Transverse colon (tissue), 4 donors: ENCODE measurements at regions of chr16 and their contacts with region 1.

Region 1: DNA sequence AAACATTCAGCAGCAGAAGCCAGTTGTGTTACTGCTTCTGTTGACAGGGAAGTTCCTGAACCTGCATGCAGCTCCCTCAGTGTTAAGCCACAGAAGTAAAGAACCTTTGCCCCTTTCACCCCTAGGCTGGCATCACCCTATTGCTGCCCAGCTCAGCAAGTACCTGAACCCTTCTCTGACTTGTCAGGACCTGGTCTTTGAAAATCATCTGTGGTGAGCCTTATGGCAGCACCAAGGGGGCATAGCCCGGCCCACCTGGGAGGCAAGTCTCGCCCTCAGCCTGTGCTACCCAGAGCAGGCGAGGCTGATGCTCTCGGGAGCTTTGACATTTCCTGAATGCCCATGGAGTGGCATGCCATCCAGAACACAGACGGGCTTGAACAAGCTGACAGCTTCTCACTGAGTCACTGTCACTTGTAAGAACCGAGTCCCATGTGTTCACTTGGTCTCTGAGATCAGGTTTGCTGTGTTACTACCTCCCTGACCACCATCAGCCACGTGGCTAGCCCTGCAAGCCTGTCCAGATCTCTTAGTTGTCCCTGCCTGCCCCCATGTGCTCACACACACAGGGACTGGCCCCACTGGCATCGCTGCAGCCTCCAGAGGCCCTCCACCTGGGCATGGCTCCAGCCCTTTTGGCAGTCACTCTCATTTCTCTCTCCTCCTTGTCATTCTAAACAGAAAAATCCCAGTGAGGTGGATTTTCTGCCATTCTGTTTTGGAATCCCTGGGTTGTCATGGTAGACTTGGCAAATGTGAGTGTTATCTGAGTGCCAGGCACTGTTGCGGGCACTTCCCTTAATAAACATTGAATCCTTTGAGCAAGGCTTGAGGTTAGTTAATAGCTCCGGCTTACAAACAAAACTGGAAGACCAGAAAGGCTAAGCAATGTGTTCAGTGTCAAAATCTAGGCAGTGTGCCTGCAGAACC is 2.9 kb upstream of the CARMIL2 start:
- DNase-seq: no peak
- H3K4me3 ChIP-seq: no peak overlapping the region
- H3K27ac ChIP-seq: peak overlapping the region in 1 of 4 donors; percentile 23
- H3K4me1 ChIP-seq: peaks cover 0 to 18% (median 8%) of the 10 kb centered on the region in 4 donors
- H3K27me3 ChIP-seq: peaks cover 34% of the 10 kb centered on the region
- CTCF ChIP-seq: no peak
- EP300 ChIP-seq: no peak
- POLR2A ChIP-seq: no peak

Region 2: GRCh38 chr16:67470359-67470758 is 171.7 kb before region 1 on chr16:
- in situ Hi-C with region 1: no loop called
- intact Hi-C with region 1: no loop called
- DNase-seq: no peak
- H3K4me3 ChIP-seq: no peak overlapping the region
- H3K27ac ChIP-seq: no peak overlapping the region
- H3K4me1 ChIP-seq: peaks cover 15 to 36% (median 17%) of the 10 kb centered on the region in 4 donors
- H3K27me3 ChIP-seq: no peaks in the 10 kb centered on the region
- CTCF ChIP-seq: no peak
- EP300 ChIP-seq: no peak
- POLR2A ChIP-seq: no peak

Region 3: GRCh38 chr16:67521095-67521804 is 120.8 kb before region 1 on chr16:
- in situ Hi-C with region 1: no loop called
- intact Hi-C with region 1: no loop called
- DNase-seq: peak; percentile 99
- H3K4me3 ChIP-seq: peak overlapping the region; percentile 16 to 60 (median 28)
- H3K27ac ChIP-seq: peak overlapping the region; percentile 89 to 97 (median 94)
- H3K4me1 ChIP-seq: peaks cover 4 to 8% (median 6%) of the 10 kb centered on the region in 4 donors
- H3K27me3 ChIP-seq: no peaks in the 10 kb centered on the region
- CTCF ChIP-seq: peak; percentile 72 to 98 (median 84)
- EP300 ChIP-seq: no peak
- POLR2A ChIP-seq: peak; percentile 33

Region 4: DNA sequence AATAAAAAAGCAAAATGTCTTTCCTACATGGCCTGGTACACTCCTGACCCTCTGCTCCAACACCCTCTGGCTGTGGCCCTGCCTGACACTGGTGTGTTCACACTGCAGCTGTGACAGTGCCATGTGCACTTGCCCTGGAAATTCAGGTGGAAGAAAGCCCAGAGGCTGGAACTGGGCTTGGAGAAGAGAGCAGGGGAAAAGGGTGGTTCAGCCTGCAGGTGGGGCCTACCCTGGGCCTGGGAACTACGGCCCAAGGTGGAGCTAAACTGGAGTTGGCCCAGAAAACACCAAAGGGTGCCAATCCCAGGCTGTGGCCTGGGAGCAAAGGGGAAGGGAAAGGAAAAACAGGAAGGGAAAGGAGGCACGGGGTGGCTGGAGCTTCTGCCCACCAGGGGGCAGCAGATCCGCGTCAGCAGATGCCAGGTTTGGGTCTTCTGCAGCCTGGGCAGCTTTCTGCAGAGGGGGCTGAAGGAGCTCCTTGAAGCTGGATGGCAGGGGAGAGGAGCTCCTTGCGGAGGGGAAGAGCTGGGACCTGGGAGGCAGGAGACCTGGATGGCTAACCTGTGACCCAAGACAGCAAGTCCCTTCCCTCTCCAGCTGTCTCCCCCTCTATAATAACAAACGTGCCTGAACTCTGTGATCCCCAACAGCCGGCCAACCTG is 95.2 kb before region 1 on chr16:
- in situ Hi-C with region 1: loop called in 1 of 4 experiments (anchors 10 kb)
- intact Hi-C with region 1: loop called (anchors 5 kb)
- DNase-seq: peak; percentile 90
- H3K4me3 ChIP-seq: no peak overlapping the region
- H3K27ac ChIP-seq: peak overlapping the region; percentile 39 to 78 (median 63)
- H3K4me1 ChIP-seq: peaks cover 13 to 22% (median 18%) of the 10 kb centered on the region in 4 donors
- H3K27me3 ChIP-seq: no peaks in the 10 kb centered on the region
- CTCF ChIP-seq: peak; percentile 96 to 98 (median 96)
- EP300 ChIP-seq: no peak
- POLR2A ChIP-seq: no peak

Region 5: DNA sequence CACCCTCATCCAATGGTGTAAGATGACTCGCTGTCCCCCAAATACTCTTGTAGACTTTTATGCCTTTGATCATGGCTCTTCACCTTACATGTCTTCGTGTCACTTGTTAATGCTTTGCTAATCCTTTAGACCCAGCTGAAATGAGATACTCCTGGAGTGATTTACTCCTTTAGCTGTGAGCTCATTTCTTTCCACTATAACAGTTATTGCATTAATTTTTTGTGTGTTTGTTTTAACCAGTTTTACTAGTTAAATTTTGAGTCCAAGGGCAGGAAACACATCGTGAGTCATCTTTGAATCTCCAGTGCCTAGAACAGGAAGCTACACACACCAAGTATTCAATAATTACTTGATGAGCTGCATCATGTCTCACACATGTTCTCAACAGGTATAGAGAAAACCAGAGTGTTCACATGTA is 86.2 kb before region 1 on chr16:
- in situ Hi-C with region 1: loop called in 1 of 4 experiments (anchors 10 kb)
- intact Hi-C with region 1: no loop called
- DNase-seq: no peak
- H3K4me3 ChIP-seq: no peak overlapping the region
- H3K27ac ChIP-seq: peak overlapping the region in 2 of 4 donors; percentile 30 to 31
- H3K4me1 ChIP-seq: peaks cover 0 to 8% (median 3%) of the 10 kb centered on the region in 4 donors
- H3K27me3 ChIP-seq: no peaks in the 10 kb centered on the region
- CTCF ChIP-seq: no peak
- EP300 ChIP-seq: no peak
- POLR2A ChIP-seq: no peak